ENCODE measurements at regions of chr4 and their contacts with region 1.

Region 1: DNA sequence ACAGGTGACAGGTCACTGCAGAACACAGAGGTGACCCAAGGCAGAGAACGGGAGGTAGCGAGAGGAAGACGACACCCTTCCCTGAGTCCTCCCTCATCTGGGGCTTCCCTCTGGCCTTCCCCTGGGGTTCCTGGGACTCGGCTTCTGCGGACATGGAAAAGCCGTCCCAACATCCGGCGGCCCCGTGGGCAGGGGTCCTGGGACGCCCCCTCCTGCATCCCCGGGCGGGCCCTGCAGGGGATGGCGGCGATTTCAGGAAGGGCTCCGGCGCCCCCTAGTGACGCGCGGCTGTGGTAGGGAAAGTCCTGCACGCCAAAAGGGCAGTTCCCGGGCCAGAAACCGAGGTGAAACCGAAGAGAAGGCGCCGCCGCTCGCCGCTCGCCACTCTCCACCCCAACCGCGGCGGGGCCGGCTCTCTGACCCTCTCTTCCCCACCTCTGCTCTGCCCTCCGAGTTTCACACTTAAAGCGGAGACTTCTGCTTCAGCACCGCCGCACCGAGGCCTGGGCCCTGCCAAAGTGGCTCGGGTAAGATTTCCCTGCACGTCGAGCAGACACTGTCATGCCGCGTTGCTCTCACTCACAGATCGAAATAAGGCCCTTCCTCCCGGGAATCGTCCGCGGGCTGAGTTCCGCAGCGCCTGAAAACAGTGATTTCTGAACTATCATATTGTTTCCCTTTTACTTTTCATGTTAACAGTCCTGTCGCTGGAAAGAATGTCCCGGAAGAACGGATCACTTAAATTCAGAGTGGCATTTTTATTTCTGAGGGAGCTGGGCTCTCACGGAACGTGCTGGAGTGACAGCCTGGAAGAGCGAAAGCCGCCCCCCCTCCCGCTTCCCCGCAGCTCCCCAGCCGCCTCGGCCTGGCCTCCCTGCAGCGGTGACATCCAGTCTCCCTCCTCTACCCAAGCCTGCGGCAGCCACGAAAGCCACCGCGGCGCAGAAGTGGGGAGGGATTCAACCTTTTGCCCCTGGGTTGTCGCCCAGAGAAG is 110.6 kb downstream of the DCTD start:
- DNase-seq: peak; percentile 21
- ATAC-seq: peak; percentile 91
- H3K4me3 ChIP-seq: peak overlapping the region; percentile 23 to 39; a peak in 3 of 4 replicates
- H3K27ac ChIP-seq: no peak overlapping the region
- H3K4me1 ChIP-seq: peaks cover 4 to 20% of the 10 kb centered on the region in 2 experiments; a peak in 2 of 4 replicates
- H3K27me3 ChIP-seq: no peaks in the 10 kb centered on the region
- CTCF ChIP-seq: peak; percentile 83 to 88 (median 85)
- POLR2A ChIP-seq: no peak
- RAD21 ChIP-seq: peak; percentile 92

Region 2: GRCh38 chr4:180828440-180829018 is 1978.0 kb before region 1 on chr4:
- CTCF ChIA-PET with region 1: no interaction called
- POLR2A ChIA-PET with region 1: no interaction called
- RAD21 ChIA-PET with region 1: no interaction called
- intact Hi-C with region 1: loop called (anchors 2 kb)
- DNase-seq: peak; percentile 69
- ATAC-seq: peak; percentile 64
- H3K4me3 ChIP-seq: no peak overlapping the region
- H3K27ac ChIP-seq: no peak overlapping the region
- H3K4me1 ChIP-seq: peaks cover 0 to 7% of the 10 kb centered on the region in 2 experiments; a peak in 3 of 4 replicates
- H3K27me3 ChIP-seq: no peaks in the 10 kb centered on the region
- CTCF ChIP-seq: peak; percentile 52 to 82 (median 69)
- POLR2A ChIP-seq: no peak
- RAD21 ChIP-seq: peak; percentile 87

Region 3: DNA sequence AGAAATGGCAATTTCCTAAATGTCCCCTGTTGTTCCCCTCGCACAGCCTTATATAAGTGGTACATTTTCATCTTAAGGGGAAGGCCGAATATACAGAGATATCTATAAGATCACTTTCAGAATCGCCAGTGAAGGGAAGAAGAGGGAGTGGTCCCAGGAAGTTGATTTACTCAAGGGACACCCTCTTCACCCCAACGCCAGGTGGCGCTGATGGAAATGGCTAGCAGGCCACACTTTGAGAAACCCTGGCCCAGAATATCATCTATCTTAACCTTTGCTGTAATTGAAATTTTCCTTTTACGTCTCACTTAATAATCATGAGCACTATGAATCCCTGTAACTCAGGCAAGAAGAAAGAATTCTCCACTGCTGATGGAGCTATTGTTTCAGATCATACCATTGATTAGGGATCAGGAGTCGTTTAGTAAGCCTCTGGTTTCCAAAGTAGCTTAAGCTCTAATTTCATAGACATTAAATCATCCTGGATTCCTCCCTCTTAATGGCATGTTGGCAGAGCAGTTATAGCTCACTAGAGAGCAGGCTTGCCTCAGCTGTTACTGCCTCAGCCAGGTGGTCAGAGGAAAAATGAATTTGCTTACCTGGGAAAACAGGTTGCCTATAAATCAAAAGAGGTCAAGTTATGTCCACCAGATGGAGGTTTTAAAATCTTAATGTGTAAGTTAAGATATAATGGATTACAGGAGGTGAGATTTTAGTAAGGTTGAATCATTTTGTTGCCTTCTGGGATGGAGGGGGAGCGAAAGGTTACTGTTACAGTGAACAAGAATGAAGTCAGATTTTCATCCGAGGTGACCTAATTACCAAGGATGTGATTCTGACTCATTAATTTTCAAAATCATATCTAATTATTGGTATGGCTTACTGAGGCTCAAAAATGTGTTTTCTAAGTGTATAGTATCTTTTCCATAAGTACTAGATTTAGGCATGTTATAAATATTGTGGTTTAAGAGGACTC is 1504.5 kb before region 1 on chr4:
- CTCF ChIA-PET with region 1: no interaction called
- POLR2A ChIA-PET with region 1: no interaction called
- RAD21 ChIA-PET with region 1: no interaction called
- intact Hi-C with region 1: loop called (anchors 5 kb)
- DNase-seq: peak; percentile 41
- ATAC-seq: peak; percentile 92
- H3K4me3 ChIP-seq: no peak overlapping the region
- H3K27ac ChIP-seq: no peak overlapping the region
- H3K4me1 ChIP-seq: no peaks in the 10 kb centered on the region
- H3K27me3 ChIP-seq: no peaks in the 10 kb centered on the region
- CTCF ChIP-seq: peak; percentile 40 to 85 (median 75); a peak in 5 of 6 replicates
- POLR2A ChIP-seq: no peak
- RAD21 ChIP-seq: peak; percentile 58

Region 4: GRCh38 chr4:182478475-182478874 is 328.1 kb before region 1 on chr4:
- CTCF ChIA-PET with region 1: no interaction called
- POLR2A ChIA-PET with region 1: no interaction called
- RAD21 ChIA-PET with region 1: no interaction called
- intact Hi-C with region 1: loop called (anchors 1 kb)
- DNase-seq: peak; percentile 16
- ATAC-seq: peak; percentile 74
- H3K4me3 ChIP-seq: no peak overlapping the region
- H3K27ac ChIP-seq: no peak overlapping the region
- H3K4me1 ChIP-seq: no peaks in the 10 kb centered on the region
- H3K27me3 ChIP-seq: peaks cover 9% of the 10 kb centered on the region; the same call in 1 of the 2 replicates
- CTCF ChIP-seq: peak; percentile 47 to 54 (median 53); a peak in 5 of 6 replicates
- POLR2A ChIP-seq: no peak
- RAD21 ChIP-seq: peak; percentile 42

Region 5: GRCh38 chr4:182795446-182796238 is 10.9 kb before region 1 on chr4:
- CTCF ChIA-PET with region 1: no interaction called
- POLR2A ChIA-PET with region 1: no interaction called
- RAD21 ChIA-PET with region 1: no interaction called
- intact Hi-C with region 1: no loop called
- DNase-seq: no peak
- ATAC-seq: no peak
- H3K4me3 ChIP-seq: no peak overlapping the region
- H3K27ac ChIP-seq: no peak overlapping the region
- H3K4me1 ChIP-seq: no peaks in the 10 kb centered on the region
- H3K27me3 ChIP-seq: peaks cover 12% of the 10 kb centered on the region
- CTCF ChIP-seq: no peak
- POLR2A ChIP-seq: no peak
- RAD21 ChIP-seq: no peak

Region 6: DNA sequence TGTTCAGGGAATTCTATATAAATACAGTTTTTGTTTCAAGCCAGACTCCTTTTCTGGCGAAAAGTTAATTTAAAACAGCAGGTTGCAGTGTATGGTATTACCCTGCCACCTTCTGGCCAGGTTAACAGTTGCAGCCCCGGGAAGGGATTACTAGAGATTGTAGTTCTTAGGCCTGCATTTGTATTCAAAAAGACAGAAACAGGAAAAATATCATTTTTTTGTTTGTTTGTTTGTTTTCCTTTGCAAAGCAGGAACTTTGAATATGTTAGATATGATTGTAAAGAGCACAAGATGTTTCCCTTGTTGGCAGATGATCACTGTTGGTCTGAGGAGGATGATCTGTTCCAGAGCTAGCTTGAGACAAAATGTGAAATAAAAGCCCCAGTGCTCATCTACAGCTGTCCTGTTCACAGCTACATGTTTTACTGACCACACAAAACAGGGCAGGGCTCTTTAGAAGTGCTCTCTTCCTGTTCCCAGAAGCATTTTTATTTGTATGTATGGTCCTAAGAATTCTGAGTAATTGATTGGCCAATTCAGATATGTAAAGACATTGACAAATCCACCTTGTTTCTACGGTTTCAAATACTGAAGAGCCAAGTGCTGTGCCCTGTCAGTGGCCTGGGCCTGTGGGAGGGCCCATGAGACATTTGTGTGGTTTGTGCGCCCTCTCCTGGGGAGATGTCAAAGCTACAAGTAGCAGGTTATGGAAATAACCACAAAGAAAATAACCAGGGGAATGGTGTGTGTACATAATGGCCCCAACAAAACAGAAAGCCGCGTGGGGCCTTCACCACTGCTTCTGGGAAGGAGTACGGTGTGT is 455.6 kb after region 1 on chr4:
- CTCF ChIA-PET with region 1: no interaction called
- POLR2A ChIA-PET with region 1: no interaction called
- RAD21 ChIA-PET with region 1: no interaction called
- intact Hi-C with region 1: loop called (anchors 10 kb)
- DNase-seq: peak; percentile 56
- ATAC-seq: peak; percentile 97
- H3K4me3 ChIP-seq: no peak overlapping the region
- H3K27ac ChIP-seq: 0 out of 2 replicates have a peak overlapping the region, but pooled peaks have one; percentile 6
- H3K4me1 ChIP-seq: peaks cover 0 to 4% of the 10 kb centered on the region in 2 experiments; a peak in 2 of 4 replicates
- H3K27me3 ChIP-seq: no peaks in the 10 kb centered on the region
- CTCF ChIP-seq: peak; percentile 84 to 87 (median 86)
- POLR2A ChIP-seq: no peak
- RAD21 ChIP-seq: peak; percentile 82